Activated CD4-positive, alpha-beta T cell treated with anti-CD3 and anti-CD28 coated beads, Interleukin-2, amount 10 ng/mL, durations not matched to agents 24 days and 14 days (primary cell): ENCODE measurements at regions of chr1 and their contacts with region 1.

Region 1: GRCh38 chr1:198520524-198521254 is 19.8 kb downstream of the ATP6V1G3 start:
- DNase-seq: peak; percentile 69
- H3K4me3 Mint-ChIP-seq: peak overlapping the region; percentile 59
- H3K27ac Mint-ChIP-seq: peak overlapping the region; percentile 78
- H3K4me1 Mint-ChIP-seq: peaks cover 53% of the 10 kb centered on the region
- H3K27me3 Mint-ChIP-seq: no peaks in the 10 kb centered on the region

Region 2: DNA sequence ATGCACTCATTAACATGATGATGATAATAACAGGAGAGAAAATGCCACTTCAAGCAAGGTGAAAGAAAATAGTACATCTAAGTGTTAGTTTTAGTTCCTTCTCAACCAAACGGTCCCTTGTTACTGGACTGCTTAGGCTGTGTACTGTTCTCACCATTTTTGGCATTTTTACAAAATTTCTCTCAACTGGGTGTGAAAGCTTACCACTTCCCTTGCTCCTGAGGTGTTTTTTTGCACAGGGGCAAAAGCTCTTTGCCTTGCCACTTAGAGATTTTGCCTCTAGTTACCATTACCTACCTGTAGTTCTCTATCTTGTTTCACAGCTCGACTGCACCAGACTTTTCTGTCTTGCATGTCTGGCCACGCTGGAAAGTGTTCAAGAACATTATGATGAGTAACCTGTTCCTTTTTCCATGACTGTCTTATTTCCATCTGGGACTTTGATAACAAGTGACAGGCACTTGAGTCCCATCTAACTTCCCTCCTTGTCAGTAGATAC is 353.2 kb before region 1 on chr1:
- intact Hi-C with region 1: loop called (anchors 2 kb)
- DNase-seq: peak; percentile 74
- H3K4me3 Mint-ChIP-seq: peak overlapping the region; percentile 73
- H3K27ac Mint-ChIP-seq: peak overlapping the region; percentile 94
- H3K4me1 Mint-ChIP-seq: peaks cover 65% of the 10 kb centered on the region
- H3K27me3 Mint-ChIP-seq: no peaks in the 10 kb centered on the region

Region 3: DNA sequence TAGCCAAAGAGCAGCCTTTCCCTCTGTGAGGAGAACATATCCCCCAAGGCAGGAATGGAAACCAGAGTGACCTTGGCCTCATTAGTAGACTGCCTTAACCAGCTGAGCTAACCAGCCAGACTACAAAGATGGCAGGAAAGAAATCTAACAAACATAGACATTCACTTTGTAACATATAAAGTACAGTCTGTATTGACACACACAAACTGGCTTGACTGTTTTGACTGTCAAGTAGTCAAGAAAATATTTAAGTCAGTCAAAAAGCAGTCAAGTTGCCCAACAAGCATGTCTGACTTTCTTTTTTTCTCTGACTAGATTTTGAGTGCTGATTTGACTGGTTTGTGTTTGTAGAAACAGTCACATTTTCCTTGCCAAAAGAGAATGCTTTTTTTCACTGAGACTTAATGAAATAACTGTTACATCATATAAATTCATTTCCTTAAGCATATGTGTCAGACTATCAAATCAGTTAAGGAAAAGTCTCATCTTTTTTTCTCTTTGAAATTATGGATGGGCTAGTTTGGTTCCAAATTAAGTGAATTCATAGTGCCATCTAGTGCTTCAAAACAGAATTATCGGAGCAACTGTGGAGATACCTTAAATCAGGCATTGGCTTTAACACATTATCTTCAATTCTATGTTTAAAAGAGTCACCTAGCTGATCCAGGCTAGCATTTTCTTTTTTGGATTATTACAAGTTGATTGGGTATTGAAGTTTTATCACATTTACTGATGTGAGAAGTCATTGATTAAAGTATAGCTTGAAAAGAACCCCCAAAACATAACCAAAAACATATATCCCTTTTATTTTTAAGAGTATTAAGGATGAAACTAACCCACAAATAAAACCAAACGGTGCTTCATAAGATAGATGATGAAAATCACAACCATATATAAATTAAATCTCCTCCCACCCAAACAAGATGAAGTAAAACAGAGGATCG is 55.2 kb before region 1 on chr1:
- intact Hi-C with region 1: loop called (anchors 5 kb)
- DNase-seq: peak; percentile 62
- H3K4me3 Mint-ChIP-seq: no peak overlapping the region
- H3K27ac Mint-ChIP-seq: no peak overlapping the region
- H3K4me1 Mint-ChIP-seq: peaks cover 4% of the 10 kb centered on the region
- H3K27me3 Mint-ChIP-seq: peaks cover 2% of the 10 kb centered on the region

Region 4: DNA sequence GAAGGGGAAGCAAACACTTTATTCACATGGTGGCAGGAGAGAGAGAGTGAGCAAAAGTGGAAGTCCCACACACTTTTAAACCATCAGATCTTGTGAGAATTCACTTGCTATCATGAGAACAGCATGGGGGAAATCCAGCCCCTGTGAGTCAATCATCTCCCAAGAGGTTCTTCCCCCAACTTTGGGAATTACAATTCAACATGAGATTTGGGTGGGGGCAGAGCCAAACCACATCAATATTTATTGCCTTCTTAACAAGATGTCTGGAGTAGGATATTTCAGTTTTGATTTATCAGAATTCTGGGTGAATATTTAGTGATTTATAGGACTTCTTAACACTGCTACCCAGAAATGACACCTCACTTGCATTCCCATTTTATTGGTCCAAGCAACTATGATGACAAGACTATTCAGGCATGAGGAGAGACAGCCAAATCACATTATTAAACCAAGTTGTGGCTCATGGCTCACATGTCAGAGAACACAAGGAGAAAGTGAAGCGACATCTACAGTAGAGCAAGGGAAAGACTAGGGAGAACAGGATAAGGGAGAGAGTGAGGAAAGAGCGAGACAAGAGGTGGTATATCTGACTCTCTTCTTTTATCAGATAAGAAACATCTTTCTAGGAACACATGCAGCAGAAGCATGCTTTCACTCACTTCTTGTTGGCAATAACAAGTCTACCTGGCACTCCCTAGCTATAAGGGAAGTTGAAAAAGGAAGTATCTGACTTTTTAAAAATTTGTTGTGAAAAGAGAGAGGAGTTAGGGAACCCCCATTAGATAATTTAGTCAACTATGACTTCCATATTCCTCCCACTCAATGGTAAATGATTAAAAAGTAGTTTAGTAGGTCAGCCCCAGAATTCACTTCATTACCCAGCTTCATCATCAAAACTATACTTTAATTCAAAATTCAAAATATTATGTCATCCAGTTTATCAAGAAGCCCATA is 81.5 kb after region 1 on chr1:
- intact Hi-C with region 1: loop called (anchors 1 kb)
- DNase-seq: no peak
- H3K4me3 Mint-ChIP-seq: peak overlapping the region; percentile 32
- H3K27ac Mint-ChIP-seq: peak overlapping the region; percentile 83
- H3K4me1 Mint-ChIP-seq: peaks cover 55% of the 10 kb centered on the region
- H3K27me3 Mint-ChIP-seq: no peaks in the 10 kb centered on the region

Region 5: GRCh38 chr1:198638894-198639635 is 118.4 kb after region 1 on chr1 and contains the start of gene PTPRC:
- intact Hi-C with region 1: loop called (anchors 1 kb)
- DNase-seq: peak; percentile 84
- H3K4me3 Mint-ChIP-seq: peak within 1 kb of the TSS; percentile 89
- H3K27ac Mint-ChIP-seq: peak within 1 kb of the TSS; percentile 95
- H3K4me1 Mint-ChIP-seq: peaks cover 47% of the 10 kb centered on the region
- H3K27me3 Mint-ChIP-seq: no peaks in the 10 kb centered on the region
- total RNA-seq, gene PTPRC: 436 and 438 TPM in 2 replicates

Region 6: DNA sequence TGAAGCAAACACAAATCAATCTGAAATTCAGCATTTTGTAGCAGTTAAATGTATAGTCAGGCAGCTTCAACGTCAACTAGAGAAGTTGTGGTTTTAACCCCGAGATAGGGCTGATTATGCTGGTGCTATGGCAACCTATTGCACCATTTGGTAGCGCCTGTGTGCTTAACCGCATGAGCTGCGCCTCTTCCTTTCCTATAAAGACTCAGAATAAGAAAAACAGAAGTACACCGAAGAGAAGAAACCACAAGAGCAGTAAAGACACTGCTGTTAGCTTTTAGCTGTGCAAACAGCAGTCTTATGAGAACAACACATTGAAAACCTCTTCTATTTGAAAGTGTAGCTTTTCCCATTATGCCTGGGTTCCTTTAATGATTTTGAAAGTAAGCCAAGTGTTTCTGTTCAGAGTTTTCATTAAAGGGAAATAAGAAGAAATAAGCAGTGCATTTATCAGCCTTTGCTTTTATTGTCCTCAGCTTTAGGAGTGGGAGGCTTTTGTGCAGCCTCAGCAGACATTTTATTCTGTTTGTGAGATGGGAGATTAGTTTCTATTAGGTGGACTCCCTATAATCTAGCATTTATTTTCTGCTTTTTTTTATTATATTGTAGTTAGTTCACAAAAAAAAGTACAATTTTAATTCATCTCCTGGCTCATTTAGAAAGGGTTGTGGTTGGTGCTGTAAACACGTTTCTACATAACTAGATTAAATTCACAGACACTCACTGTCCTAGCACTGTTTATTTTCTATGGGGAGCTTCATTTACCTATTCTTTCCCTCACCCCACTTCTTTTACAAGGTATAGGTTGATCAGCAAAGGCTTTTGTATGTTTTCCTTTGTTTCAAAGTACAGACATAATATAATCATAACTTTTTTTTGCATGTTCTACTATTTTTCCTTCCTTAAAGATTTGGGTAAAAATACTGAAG is 161.4 kb after region 1 on chr1:
- intact Hi-C with region 1: loop called (anchors 1 kb)
- DNase-seq: peak; percentile 95
- H3K4me3 Mint-ChIP-seq: peak overlapping the region; percentile 75
- H3K27ac Mint-ChIP-seq: peak overlapping the region; percentile 91
- H3K4me1 Mint-ChIP-seq: peaks cover 71% of the 10 kb centered on the region
- H3K27me3 Mint-ChIP-seq: no peaks in the 10 kb centered on the region

Region 7: GRCh38 chr1:198922638-198923430 is 402.1 kb after region 1 on chr1:
- intact Hi-C with region 1: loop called (anchors 2 kb)
- DNase-seq: no peak
- H3K4me3 Mint-ChIP-seq: peak overlapping the region; percentile 84
- H3K27ac Mint-ChIP-seq: peak overlapping the region; percentile 93
- H3K4me1 Mint-ChIP-seq: peaks cover 71% of the 10 kb centered on the region
- H3K27me3 Mint-ChIP-seq: no peaks in the 10 kb centered on the region

Region 8: GRCh38 chr1:199157494-199157893 is 636.8 kb after region 1 on chr1:
- intact Hi-C with region 1: no loop called
- DNase-seq: no peak
- H3K4me3 Mint-ChIP-seq: no peak overlapping the region
- H3K27ac Mint-ChIP-seq: no peak overlapping the region
- H3K4me1 Mint-ChIP-seq: peaks cover 17% of the 10 kb centered on the region
- H3K27me3 Mint-ChIP-seq: peaks cover 8% of the 10 kb centered on the region